ENCODE measurements at regions of chr17 and their contacts with region 1.

Region 1: DNA sequence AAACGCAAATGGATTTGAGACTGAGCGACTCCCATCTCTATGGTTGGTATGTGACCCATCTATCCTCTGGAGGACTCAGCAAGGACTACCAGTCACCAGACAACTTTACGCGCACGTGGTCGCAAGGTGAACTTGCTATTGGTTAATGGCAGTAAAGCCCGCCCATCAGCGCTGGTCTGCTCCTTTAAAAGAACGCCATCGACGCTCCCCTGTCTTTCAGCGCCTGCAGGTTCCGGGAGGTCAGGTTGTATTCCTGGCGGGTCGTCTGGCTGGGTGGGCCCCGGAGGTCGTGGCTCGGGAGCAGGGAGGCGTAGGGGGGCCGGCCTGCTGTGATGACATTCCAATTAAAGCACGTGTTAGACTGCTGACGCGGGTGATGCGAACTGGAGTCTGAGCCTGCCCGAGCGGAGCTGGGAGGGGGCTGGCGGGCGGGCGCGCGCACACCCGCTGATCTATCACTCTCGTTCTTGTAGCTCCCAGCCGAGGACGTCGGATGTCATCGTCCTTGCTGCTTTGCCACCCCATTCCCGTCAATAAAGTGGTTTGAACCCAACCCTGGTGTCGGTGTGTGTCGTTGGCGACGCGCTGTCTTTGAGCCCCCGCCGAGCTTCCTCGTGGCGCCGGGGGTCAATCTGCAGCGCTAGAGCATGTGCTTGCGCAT is 15.9 kb upstream of the ERN1 start:
- DNase-seq: peak; percentile 100
- ATAC-seq: peak; percentile 94
- H3K4me3 ChIP-seq: peak overlapping the region; percentile 56
- H3K27ac ChIP-seq: peak overlapping the region; percentile 75
- H3K4me1 ChIP-seq: peaks cover 5% of the 10 kb centered on the region
- H3K27me3 ChIP-seq: no peaks in the 10 kb centered on the region
- CTCF ChIP-seq: no peak
- POLR2A ChIP-seq: peak; percentile 99
- RAD21 ChIP-seq: no peak

Region 2: GRCh38 chr17:64240741-64241347 is 95.0 kb after region 1 on chr17:
- CTCF ChIA-PET with region 1: no interaction called
- POLR2A ChIA-PET with region 1: interaction called, 3 read pairs
- dilution Hi-C with region 1: no loop called
- in situ Hi-C with region 1: no loop called
- intact Hi-C with region 1: loop called (anchors 1 kb)
- DNase-seq: peak; percentile 93
- ATAC-seq: peak; percentile 75
- H3K4me3 ChIP-seq: no peak overlapping the region
- H3K27ac ChIP-seq: peak overlapping the region; percentile 76
- H3K4me1 ChIP-seq: peaks cover 18% of the 10 kb centered on the region
- H3K27me3 ChIP-seq: no peaks in the 10 kb centered on the region
- CTCF ChIP-seq: no peak
- POLR2A ChIP-seq: no peak
- RAD21 ChIP-seq: no peak

Region 3: GRCh38 chr17:64262417-64263260 is 116.8 kb after region 1 on chr17 and contains the start of gene TEX2:
- CTCF ChIA-PET with region 1: no interaction called
- POLR2A ChIA-PET with region 1: interaction called, 4 read pairs
- dilution Hi-C with region 1: no loop called
- in situ Hi-C with region 1: no loop called
- intact Hi-C with region 1: loop called (anchors 1 kb)
- DNase-seq: no peak
- ATAC-seq: peak; percentile 46
- H3K4me3 ChIP-seq: peak within 1 kb of the TSS; percentile 83
- H3K27ac ChIP-seq: peak within 1 kb of the TSS; percentile 40
- H3K4me1 ChIP-seq: peaks cover 5% of the 10 kb centered on the region
- H3K27me3 ChIP-seq: peaks cover 7% of the 10 kb centered on the region
- CTCF ChIP-seq: no peak
- POLR2A ChIP-seq: peak; percentile 72
- RAD21 ChIP-seq: no peak
- total RNA-seq, gene TEX2: 21.9 and 24.4 TPM in 2 replicates